ENCODE measurements at regions of chr17 and their contacts with region 1.

Region 1: GRCh38 chr17:79850571-79851461 is 11.6 kb upstream of the CBX4 start:
- DNase-seq: no peak

Region 2: GRCh38 chr17:79915850-79916430 is 65.1 kb after region 1 on chr17:
- intact Hi-C with region 1: loop called (anchors 5 kb)
- DNase-seq: no peak

Measured in cardiac septum (tissue), 1 donor.